ENCODE measurements at regions of chr19 and their contacts with region 1.

Region 1: DNA sequence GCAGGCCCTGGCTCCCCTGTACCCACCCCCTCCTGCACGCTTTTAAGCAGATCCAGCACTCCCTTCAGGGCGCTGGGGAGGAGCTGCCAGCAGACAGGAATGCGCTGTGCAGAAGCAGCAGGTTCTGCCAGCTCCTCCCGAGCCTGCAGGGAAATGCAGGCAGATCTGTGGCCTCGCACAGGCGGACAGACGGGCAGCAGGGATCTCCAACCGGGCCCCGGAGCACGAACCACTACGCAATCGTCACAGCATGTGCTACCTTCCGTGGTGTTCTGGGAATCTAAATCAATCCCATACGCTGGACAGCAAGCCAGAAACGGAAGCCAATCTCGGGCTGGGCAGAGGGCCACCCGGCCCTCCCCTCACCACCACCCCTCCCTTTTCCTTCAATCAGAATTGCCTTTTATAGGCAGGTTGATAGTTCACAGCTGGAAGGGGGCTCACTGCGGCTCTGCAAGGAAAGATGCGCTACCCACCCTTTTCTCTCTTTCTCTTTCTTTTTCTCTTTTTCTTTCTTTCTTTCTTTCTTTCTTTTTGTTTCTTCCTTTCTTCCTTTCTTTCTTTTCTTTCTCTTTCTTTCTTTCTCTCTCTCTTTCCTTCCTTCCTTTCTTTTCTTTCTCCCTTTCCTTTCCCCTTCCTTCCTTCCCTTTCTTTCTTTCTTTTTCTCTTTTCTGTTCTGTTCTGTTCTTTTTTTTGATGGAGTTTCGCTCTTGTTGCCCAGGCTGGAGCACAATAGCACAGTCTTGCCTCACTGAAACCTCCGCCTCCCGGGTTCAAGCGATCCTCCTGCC is 99.9 kb downstream of the GNG7 start:
- DNase-seq: peak; percentile 72 to 95 (median 88)
- ATAC-seq: peak; percentile 83 to 95 (median 88)
- H3K4me3 ChIP-seq: peak overlapping the region in 9 of 12 donors; percentile 7 to 42 (median 19)
- H3K27ac ChIP-seq: peak overlapping the region; percentile 54 to 94 (median 82)
- H3K4me1 ChIP-seq: peaks cover 0 to 40% (median 22%) of the 10 kb centered on the region in 12 donors
- H3K27me3 ChIP-seq: no peaks in the 10 kb centered on the region
- CTCF ChIP-seq: peak in 1 of 12 donors; percentile 8
- POLR2A ChIP-seq: peak in 1 of 2 donors; percentile 51

Region 2: DNA sequence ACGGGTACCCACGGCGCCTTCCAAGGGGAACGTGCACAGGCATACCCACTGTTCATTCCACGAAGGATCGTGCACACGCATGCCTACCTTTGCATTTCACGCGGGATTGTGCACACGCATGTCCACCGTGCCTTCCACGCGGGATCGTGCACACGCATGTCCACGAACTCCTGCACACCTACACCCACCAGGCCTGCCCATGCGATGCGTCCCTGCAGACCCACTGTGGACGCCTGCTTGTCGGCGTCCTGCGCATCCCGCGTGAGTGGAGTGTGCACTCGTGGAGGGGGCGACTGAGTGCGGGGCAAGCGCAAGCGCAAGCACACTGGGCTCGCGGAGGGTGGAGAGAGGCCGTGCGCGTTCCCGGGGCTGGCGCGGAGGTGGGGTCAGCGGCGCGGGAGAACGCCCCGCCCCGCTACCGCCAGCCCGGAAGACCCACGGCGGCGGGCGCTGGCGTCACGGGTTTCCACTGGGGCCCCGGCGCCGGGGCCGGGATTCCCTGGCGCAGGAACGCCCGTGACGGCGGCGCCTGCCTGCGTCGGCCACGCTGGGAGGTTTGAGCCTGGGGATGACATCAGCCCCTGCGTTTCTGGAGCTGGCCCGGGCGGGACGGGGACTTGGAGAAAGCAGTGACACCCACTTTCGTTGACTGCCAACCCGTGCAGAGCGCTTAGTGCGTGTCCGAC is 108.0 kb before region 1 on chr19:
- intact Hi-C with region 1: loop called in 1 of 10 experiments (anchors 1 kb)
- DNase-seq: peak; percentile 87 to 94 (median 89)
- ATAC-seq: peak; percentile 52 to 81 (median 78)
- H3K4me3 ChIP-seq: peak overlapping the region; percentile 39 to 76 (median 66)
- H3K27ac ChIP-seq: peak overlapping the region; percentile 75 to 98 (median 92)
- H3K4me1 ChIP-seq: peaks cover 2 to 47% (median 23%) of the 10 kb centered on the region in 12 donors
- H3K27me3 ChIP-seq: peaks cover 0 to 27% (median 0%) of the 10 kb centered on the region in 9 donors
- CTCF ChIP-seq: no peak
- POLR2A ChIP-seq: peak in 1 of 2 donors; percentile 24

Region 3: GRCh38 chr19:2567246-2567979 is 35.2 kb before region 1 on chr19:
- intact Hi-C with region 1: no loop called
- DNase-seq: peak; percentile 63 to 84 (median 77)
- ATAC-seq: peak in 3 of 4 donors; percentile 65 to 87 (median 85)
- H3K4me3 ChIP-seq: no peak overlapping the region
- H3K27ac ChIP-seq: peak overlapping the region in 11 of 12 donors; percentile 18 to 82 (median 57)
- H3K4me1 ChIP-seq: peaks cover 0 to 25% (median 6%) of the 10 kb centered on the region in 12 donors
- H3K27me3 ChIP-seq: no peaks in the 10 kb centered on the region
- CTCF ChIP-seq: no peak
- POLR2A ChIP-seq: no peak

Region 4: DNA sequence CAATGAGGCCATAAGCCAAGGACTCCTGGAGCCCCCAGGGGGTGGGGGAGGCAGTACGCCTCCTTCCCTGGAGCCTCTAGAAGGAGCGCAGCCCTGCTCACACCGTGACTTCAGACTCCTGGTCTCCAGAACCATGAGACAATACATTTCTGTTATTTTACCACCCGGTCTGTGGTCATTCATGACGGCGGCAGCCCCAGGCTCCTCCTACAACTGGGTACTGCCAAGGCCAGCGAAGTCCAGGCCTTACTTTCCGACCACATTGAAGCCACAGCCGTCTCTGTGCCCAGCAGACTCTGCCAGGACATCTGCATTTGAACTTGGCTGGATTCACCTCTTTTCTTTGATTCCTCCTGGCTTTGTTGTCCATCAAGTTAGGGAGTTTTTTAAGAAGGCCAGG is 89.4 kb after region 1 on chr19:
- intact Hi-C with region 1: no loop called
- DNase-seq: no peak
- ATAC-seq: no peak
- H3K4me3 ChIP-seq: no peak overlapping the region
- H3K27ac ChIP-seq: no peak overlapping the region
- H3K4me1 ChIP-seq: peaks cover 0 to 33% (median 13%) of the 10 kb centered on the region in 12 donors
- H3K27me3 ChIP-seq: no peaks in the 10 kb centered on the region
- CTCF ChIP-seq: no peak
- POLR2A ChIP-seq: no peak

Measured in heart left ventricle (tissue), 16 donors.